Gastrocnemius medialis (tissue), 4 donors: ENCODE measurements at regions of chr19 and their contacts with region 1.

Region 1: GRCh38 chr19:7191946-7192691 is 102.1 kb downstream of the INSR start:
- DNase-seq: no peak
- ATAC-seq: no peak
- H3K4me3 ChIP-seq: no peak overlapping the region
- H3K27ac ChIP-seq: peak overlapping the region in 3 of 4 donors; percentile 1 to 10 (median 2)
- H3K4me1 ChIP-seq: peaks cover 0 to 4% of the 10 kb centered on the region in 2 donors
- H3K27me3 ChIP-seq: no peaks in the 10 kb centered on the region
- CTCF ChIP-seq: no peak
- POLR2A ChIP-seq: no peak

Region 2: DNA sequence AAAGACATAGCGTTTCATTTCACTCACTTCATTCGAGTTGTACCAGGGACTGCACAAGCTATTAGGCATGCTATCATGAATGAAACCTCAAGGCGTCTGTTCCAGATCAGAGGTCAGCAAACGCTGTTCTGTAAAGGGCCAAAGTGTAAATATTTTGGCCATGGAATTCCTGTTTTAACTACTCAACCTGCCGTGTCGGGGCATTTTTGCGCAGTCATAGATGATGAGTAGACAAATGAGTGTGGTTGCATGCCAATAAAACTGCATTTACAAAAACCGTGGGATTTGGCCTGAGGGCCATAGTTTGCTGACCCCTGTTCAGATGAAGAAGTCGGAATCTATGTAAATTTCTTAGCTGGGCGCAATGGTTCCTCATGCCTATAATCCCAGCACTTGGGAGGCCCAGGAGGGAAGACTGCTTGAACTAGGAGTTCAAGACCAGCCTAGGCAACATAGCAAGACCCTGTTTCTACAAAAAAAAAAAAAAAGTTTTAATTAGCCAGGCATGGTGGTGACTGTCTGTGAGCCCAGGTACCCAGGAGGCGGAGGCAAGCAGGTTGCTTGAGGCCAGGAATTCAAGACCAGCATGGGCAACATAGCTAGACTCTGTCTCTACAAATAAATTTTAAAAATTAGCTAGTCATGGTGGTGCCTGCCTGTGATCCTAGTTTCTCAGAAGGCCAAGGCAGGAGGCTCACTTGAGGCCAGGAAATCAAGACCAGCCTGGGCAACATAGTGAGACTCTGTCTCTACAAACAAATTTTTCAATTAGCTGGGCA is 95.8 kb after region 1 on chr19:
- in situ Hi-C with region 1: loop called in 3 of 4 experiments (anchors 5 to 10 kb)
- intact Hi-C with region 1: no loop called
- DNase-seq: no peak
- ATAC-seq: no peak
- H3K4me3 ChIP-seq: no peak overlapping the region
- H3K27ac ChIP-seq: peak overlapping the region in 3 of 4 donors; percentile 13 to 58 (median 32)
- H3K4me1 ChIP-seq: peaks cover 5 to 7% of the 10 kb centered on the region in 2 donors
- H3K27me3 ChIP-seq: no peaks in the 10 kb centered on the region
- CTCF ChIP-seq: no peak
- POLR2A ChIP-seq: no peak

Region 3: GRCh38 chr19:7360393-7360984 is 168.4 kb after region 1 on chr19:
- in situ Hi-C with region 1: no loop called
- intact Hi-C with region 1: no loop called
- DNase-seq: no peak
- ATAC-seq: no peak
- H3K4me3 ChIP-seq: no peak overlapping the region
- H3K27ac ChIP-seq: no peak overlapping the region
- H3K4me1 ChIP-seq: no peaks in the 10 kb centered on the region
- H3K27me3 ChIP-seq: peaks cover 0 to 2% (median 2%) of the 10 kb centered on the region in 3 donors
- CTCF ChIP-seq: no peak
- POLR2A ChIP-seq: no peak